Sigmoid colon (tissue), 7 donors: ENCODE measurements at regions of chr20 and their contacts with region 1.

Region 1: DNA sequence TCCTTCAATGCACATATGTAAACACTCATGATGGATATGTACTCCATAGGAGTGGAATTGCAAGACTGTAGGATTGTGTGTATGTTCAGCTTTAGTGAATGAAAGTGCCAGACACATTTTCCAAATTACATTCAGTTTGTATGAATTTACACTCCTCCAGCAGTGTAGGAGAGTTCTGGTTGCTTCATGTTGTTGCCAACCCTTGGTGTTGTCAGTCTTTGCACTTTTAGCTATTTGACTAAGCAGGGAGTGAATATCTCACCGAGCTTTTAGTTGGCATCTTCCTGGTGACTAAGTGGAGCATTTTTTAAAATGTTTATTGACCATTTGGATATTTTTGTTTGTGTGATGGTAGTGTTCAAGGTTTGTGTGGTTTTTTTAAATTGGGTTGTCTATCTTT is 23.9 kb downstream of the NKX2-4 start:
- DNase-seq: no peak
- H3K4me3 ChIP-seq: no peak overlapping the region
- H3K27ac ChIP-seq: no peak overlapping the region
- H3K4me1 ChIP-seq: peaks cover 0 to 3% (median 1%) of the 10 kb centered on the region in 4 donors
- H3K27me3 ChIP-seq: no peaks in the 10 kb centered on the region
- CTCF ChIP-seq: no peak
- EP300 ChIP-seq: no peak
- POLR2A ChIP-seq: no peak

Region 2: GRCh38 chr20:21325296-21325695 is 48.1 kb before region 1 on chr20:
- intact Hi-C with region 1: loop called (anchors 5 kb)
- DNase-seq: no peak
- H3K4me3 ChIP-seq: no peak overlapping the region
- H3K27ac ChIP-seq: no peak overlapping the region
- H3K4me1 ChIP-seq: peaks cover 0 to 34% (median 24%) of the 10 kb centered on the region in 4 donors
- H3K27me3 ChIP-seq: no peaks in the 10 kb centered on the region
- CTCF ChIP-seq: no peak
- EP300 ChIP-seq: no peak
- POLR2A ChIP-seq: no peak